Activated CD8-positive, alpha-beta T cell treated with anti-CD3 and anti-CD28 coated beads, Interleukin-2, amount 10 ng/mL, durations not matched to agents 7 days and 5 days (primary cell): ENCODE measurements at regions of chr5 and their contacts with region 1.

Region 1: DNA sequence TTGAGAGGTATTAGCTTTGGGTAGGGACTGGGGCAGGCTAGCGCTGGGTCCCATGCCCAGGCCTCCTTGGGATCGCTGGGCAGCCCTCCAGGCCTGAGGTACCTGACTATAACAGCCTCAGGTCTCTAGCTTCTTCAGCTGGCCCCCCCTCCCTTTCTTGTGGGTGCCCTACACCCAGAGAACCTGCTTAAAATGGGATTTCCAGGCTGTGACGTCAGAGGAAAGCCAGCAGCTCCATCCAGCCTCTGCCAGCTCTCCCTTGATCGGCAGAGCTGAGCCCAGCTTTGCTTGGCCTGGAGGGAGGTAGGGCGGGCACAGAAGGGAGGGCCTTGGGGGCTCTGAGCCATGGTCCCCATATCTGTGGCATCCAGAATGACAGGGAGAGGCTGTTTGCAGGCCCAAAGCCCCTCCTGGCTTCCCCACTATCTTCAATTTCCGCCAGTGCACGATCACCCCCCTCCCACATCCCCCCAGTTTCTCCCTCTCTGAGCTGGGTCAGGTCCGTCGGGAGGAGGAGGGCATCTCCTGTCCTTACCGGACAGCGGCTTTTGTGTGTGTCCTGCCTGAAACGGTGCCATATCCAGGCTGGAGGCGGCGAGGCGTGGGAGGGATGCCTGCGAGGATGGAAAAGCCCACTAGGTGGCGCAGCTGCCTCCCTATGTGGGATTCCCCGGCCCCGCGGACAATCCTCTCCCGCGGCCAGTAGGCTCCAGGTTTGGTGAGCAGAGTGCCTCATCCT is 10.8 kb downstream of the REEP2 start:
- DNase-seq: peak; percentile 83
- ATAC-seq: peak; percentile 95
- H3K4me3 Mint-ChIP-seq: peak overlapping the region; percentile 31
- H3K27ac Mint-ChIP-seq: no peak overlapping the region
- H3K4me1 Mint-ChIP-seq: peaks cover 5% of the 10 kb centered on the region
- H3K27me3 Mint-ChIP-seq: peaks cover 2% of the 10 kb centered on the region

Region 2: DNA sequence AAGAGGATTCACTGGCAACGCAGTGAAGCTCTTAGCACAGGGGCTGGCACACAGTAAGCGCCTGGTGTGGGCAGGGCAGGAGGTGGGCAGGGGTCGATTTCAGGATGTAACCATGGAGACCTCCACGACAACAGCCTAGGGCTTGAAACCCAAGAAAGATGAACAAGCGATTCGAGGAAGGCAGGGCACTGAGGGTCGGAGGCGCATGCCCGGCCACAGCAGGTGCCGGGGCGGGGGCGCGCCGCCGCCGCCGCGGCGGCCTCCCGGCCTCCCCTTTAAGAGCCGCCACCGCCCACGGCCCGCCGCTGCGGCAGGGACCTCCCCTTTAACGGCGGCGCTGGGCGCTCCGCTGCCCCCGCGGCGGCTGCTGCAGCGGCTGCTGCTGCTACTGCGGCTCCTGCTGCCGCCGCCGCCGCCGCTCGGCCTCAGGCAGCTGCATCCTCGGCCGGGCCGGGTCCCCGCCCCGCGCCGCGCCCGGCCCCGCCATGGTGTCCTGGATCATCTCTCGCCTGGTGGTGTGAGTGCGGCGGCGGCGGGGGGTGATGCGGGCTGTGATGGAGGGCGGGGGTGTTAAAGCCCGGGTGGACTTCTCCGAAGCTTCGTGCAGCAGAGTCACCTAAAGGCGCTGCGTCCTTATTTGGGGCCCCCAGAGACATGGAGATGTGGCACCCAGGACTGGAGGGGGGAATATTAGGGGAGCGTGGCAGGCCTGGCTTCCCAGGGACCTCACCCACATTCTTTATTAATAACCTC is 10.8 kb before region 1 on chr5 and contains the start of gene REEP2:
- CTCF ChIA-PET with region 1: interaction called, 21 read pairs
- POLR2A ChIA-PET with region 1: no interaction called
- DNase-seq: peak; percentile 60
- ATAC-seq: peak; percentile 90
- H3K4me3 Mint-ChIP-seq: peak within 1 kb of the TSS; percentile 71
- H3K27ac Mint-ChIP-seq: peak within 1 kb of the TSS; percentile 6
- H3K4me1 Mint-ChIP-seq: peaks cover 12% of the 10 kb centered on the region
- H3K27me3 Mint-ChIP-seq: peaks cover 5% of the 10 kb centered on the region
- total RNA-seq, gene REEP2: 0.68 to 1.1 TPM

Region 3: GRCh38 chr5:138498376-138498775 is 48.7 kb after region 1 on chr5:
- CTCF ChIA-PET with region 1: interaction called, 65 read pairs
- POLR2A ChIA-PET with region 1: no interaction called
- DNase-seq: no peak
- ATAC-seq: no peak
- H3K4me3 Mint-ChIP-seq: no peak overlapping the region
- H3K27ac Mint-ChIP-seq: no peak overlapping the region
- H3K4me1 Mint-ChIP-seq: no peaks in the 10 kb centered on the region
- H3K27me3 Mint-ChIP-seq: peaks cover 5% of the 10 kb centered on the region